CD8-positive, alpha-beta memory T cell (primary cell): ENCODE measurements at regions of chr1 and their contacts with region 1.

Region 1: DNA sequence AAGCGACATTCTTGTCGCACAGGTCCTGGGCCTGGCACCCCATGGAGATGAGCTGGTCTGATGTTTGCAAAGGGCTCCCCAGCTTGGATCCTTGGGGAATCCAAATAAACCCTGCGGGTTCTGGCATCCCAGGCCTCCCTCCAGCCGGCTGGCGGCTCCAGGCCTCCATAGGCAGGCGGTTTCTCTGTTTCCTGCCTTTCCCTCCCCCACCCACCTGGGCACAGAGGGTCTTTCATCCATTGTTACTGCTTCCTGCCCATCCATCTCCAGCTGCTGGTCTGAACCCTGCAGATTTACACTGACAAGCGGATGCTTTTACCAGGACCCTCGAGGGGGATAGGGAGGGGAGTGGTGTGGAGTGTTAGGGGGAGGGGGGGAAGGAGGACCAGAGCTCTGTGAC is 39.1 kb upstream of the ID3 start:
- DNase-seq: no peak
- H3K4me3 ChIP-seq: no peak overlapping the region
- H3K4me3 Mint-ChIP-seq: no peak overlapping the region
- H3K27ac ChIP-seq: no peak overlapping the region
- H3K27ac Mint-ChIP-seq: peak overlapping the region in 1 of 8 donors; percentile 22
- H3K4me1 ChIP-seq: peaks cover 100% of the 10 kb centered on the region
- H3K4me1 Mint-ChIP-seq: peaks cover 80 to 94% (median 86%) of the 10 kb centered on the region in 3 donors
- H3K27me3 ChIP-seq: no peaks in the 10 kb centered on the region
- H3K27me3 Mint-ChIP-seq: no peaks in the 10 kb centered on the region

Region 2: DNA sequence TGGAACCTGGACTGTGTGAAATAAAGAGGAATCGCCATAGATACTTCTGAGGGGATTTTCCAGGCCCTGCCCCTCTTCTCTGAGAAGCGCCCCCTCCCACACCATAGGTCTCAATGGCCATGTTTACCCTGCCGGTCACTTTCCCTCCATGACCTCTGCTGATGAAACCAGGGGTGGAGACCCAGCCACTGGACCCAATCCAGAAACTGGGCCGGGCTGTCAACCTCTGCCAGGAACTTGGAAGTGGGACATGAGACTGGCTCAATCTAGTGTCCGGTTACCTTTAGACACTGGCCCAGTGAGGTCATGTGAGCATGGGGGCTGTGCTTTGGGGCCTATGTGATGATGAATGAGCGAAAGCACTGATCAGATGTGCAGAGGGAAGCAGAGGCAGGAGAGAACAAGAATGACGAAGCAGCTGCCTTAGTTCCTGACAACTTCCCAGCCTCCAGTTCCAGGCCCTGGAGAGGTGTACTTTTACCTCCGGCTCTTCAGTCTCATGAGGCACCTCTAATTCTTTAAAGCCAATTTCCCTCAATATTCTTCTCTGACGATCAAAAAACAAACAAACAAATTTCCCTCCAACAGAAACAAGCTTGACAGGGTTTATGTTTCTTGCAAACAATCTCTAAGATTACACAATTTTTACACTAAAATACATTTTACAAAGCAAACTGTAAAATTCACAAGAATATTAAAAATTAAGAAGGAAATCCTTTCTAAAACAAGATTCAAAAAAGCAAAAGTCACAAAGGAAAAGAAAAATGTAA is 119.3 kb before region 1 on chr1:
- CTCF ChIA-PET with region 1: no interaction called
- POLR2A ChIA-PET with region 1: no interaction called
- DNase-seq: no peak
- H3K4me3 ChIP-seq: no peak overlapping the region
- H3K4me3 Mint-ChIP-seq: peak overlapping the region in 1 of 7 donors; percentile 73
- H3K27ac ChIP-seq: peak overlapping the region; percentile 63
- H3K27ac Mint-ChIP-seq: no peak overlapping the region
- H3K4me1 ChIP-seq: peaks cover 9% of the 10 kb centered on the region
- H3K4me1 Mint-ChIP-seq: peaks cover 8 to 10% (median 8%) of the 10 kb centered on the region in 3 donors
- H3K27me3 ChIP-seq: peaks cover 10% of the 10 kb centered on the region
- H3K27me3 Mint-ChIP-seq: peaks cover 24 to 29% of the 10 kb centered on the region in 2 donors

Region 3: DNA sequence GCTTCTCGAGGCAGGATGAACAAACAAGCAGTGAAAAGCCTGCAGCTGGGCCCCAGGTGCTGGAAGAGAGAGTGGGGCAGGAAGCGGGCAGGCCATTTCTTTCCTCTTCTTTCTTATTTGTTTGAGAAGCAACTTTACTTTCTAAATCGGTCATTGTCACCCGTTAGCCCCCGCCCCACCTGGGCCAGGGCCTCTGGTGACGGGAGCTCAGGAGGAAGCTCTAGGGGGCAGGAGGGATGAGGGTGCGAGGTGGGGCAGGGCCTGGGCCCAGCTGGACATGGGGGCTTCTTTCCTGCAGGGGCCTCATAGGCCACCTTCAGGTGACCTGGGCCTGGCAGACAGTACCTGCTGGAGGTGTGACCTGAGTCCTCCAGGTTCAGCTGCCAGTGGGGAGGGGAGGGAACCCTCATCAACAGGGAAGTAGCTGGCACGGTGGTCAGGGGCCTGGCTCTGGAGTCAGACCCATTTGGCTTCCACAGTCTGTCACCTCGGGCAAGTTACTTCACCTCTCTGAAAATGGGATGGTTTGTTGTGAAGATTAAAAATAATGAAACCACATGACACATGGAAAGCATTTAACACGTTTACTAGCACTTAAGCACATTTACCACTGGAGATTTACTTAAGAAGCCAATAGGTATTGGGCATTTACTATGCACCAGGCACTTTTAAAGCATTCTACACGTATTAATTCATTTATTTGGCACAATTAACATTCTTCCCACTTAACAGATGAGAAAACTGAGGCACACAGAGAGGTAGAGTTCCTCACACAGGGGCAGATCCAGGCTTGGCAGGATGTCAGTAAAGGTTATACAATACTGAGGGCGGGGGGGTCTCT is 15.0 kb after region 1 on chr1:
- CTCF ChIA-PET with region 1: interaction called, 22 read pairs
- POLR2A ChIA-PET with region 1: interaction called, 16 read pairs
- DNase-seq: peak; percentile 21 to 66 (median 44)
- H3K4me3 ChIP-seq: peak overlapping the region; percentile 33
- H3K4me3 Mint-ChIP-seq: peak overlapping the region; percentile 2 to 68 (median 58)
- H3K27ac ChIP-seq: peak overlapping the region; percentile 9
- H3K27ac Mint-ChIP-seq: peak overlapping the region; percentile 73 to 97 (median 92)
- H3K4me1 ChIP-seq: peaks cover 64% of the 10 kb centered on the region
- H3K4me1 Mint-ChIP-seq: peaks cover 57 to 77% (median 73%) of the 10 kb centered on the region in 3 donors
- H3K27me3 ChIP-seq: no peaks in the 10 kb centered on the region
- H3K27me3 Mint-ChIP-seq: peaks cover 0 to 2% of the 10 kb centered on the region in 2 donors

Region 4: GRCh38 chr1:23619299-23620188 is 21.1 kb after region 1 on chr1:
- CTCF ChIA-PET with region 1: interaction called, 22 read pairs
- POLR2A ChIA-PET with region 1: interaction called, 22 read pairs
- DNase-seq: peak; percentile 68 to 92 (median 82)
- H3K4me3 ChIP-seq: peak overlapping the region; percentile 61
- H3K4me3 Mint-ChIP-seq: peak overlapping the region; percentile 79 to 88 (median 83)
- H3K27ac ChIP-seq: peak overlapping the region; percentile 34
- H3K27ac Mint-ChIP-seq: peak overlapping the region; percentile 81 to 97 (median 94)
- H3K4me1 ChIP-seq: peaks cover 83% of the 10 kb centered on the region
- H3K4me1 Mint-ChIP-seq: peaks cover 71 to 88% (median 87%) of the 10 kb centered on the region in 3 donors
- H3K27me3 ChIP-seq: no peaks in the 10 kb centered on the region
- H3K27me3 Mint-ChIP-seq: peaks cover 0 to 2% of the 10 kb centered on the region in 2 donors